ENCODE measurements at regions of chr1 and their contacts with region 1.

Region 1: DNA sequence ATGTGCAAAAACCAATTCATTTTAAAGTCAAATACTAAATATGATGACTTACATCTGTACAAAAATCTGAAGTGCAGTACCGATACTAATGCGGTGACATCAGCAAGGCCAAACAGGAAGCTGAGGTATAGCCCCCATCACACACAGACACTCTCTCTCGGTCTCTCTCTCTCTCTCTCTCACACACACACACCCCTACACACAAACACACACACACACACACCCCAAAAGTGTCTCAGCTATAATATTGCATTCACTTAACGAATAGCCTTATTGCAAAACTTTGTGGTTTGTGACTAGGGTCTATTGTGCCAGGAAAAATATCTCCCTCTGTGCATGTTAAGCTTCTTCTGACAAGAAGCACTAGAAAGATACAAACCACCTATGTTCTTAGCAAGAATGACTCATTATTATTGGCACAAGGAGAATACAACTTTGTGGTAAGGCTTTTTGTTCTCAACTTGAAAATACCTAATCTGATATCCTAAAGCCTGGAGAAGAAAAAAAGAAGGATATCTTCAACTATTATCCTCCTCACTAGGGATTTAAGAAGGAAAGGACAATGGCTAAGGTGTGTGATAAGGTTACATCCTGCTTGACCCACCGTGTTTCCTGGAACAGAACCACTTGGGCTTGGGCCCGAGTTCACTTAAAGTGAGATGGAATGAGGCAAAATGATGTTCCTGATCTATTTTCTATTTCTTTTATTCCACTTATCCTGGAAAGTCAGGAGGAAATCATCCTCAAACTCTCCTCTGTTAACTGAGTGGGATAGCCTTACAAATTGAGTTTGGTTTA is 107.1 kb downstream of the NIBAN1 start:
- DNase-seq: peak; percentile 88
- ATAC-seq: peak; percentile 84
- H3K4me3 Mint-ChIP-seq: peak overlapping the region; percentile 54
- H3K27ac Mint-ChIP-seq: peak overlapping the region; percentile 93
- H3K4me1 Mint-ChIP-seq: peaks cover 69% of the 10 kb centered on the region
- H3K27me3 Mint-ChIP-seq: no peaks in the 10 kb centered on the region

Region 2: DNA sequence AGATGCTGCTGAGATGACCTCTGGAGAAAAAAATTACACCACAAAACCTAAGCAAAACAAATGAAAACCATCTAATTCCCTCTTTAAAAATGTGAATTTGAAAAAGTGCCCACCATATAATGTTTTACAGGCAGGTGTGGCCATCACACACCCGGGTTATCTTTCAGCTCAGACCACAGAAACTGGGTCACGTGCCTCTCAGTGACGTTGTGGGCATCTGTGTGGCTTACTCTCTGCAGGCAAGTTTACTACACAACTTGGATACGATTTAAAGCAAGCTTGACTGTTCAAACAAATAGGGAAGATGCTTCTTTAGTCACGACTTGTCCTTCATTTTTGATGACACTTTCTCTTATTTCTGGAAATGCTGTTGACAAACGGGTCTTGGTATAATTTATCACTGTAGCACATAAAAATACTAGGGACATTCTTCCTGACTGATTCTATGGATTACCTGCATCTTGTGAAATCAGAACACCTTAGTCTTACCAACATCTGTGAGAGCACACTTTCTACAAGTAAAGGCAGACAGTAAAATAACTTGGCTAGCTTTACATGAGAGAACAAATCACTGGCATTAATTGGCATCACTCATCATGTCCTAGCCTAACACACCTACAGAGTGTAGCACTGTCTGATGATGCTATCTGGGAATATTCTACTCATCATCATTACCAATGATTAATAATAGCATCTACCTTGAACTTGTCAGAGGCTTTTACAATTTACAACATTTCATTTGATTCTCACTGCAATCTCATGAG is 23.3 kb before region 1 on chr1:
- CTCF ChIA-PET with region 1: interaction called, 18 read pairs
- DNase-seq: peak; percentile 92
- ATAC-seq: peak; percentile 73
- H3K4me3 Mint-ChIP-seq: peak overlapping the region; percentile 46
- H3K27ac Mint-ChIP-seq: peak overlapping the region; percentile 76
- H3K4me1 Mint-ChIP-seq: peaks cover 46% of the 10 kb centered on the region
- H3K27me3 Mint-ChIP-seq: no peaks in the 10 kb centered on the region

Region 3: GRCh38 chr1:185008838-185009237 is 141.6 kb after region 1 on chr1:
- CTCF ChIA-PET with region 1: no interaction called
- DNase-seq: no peak
- ATAC-seq: no peak
- H3K4me3 Mint-ChIP-seq: no peak overlapping the region
- H3K27ac Mint-ChIP-seq: no peak overlapping the region
- H3K4me1 Mint-ChIP-seq: no peaks in the 10 kb centered on the region
- H3K27me3 Mint-ChIP-seq: peaks cover 3% of the 10 kb centered on the region

Measured in activated CD8-positive, alpha-beta memory T cell treated with anti-CD3 and anti-CD28 coated beads, Interleukin-2, amount 10 ng/mL, durations not matched to agents 7 days and 5 days (primary cell).